ENCODE measurements at regions of chr6 and their contacts with region 1.

Region 1: DNA sequence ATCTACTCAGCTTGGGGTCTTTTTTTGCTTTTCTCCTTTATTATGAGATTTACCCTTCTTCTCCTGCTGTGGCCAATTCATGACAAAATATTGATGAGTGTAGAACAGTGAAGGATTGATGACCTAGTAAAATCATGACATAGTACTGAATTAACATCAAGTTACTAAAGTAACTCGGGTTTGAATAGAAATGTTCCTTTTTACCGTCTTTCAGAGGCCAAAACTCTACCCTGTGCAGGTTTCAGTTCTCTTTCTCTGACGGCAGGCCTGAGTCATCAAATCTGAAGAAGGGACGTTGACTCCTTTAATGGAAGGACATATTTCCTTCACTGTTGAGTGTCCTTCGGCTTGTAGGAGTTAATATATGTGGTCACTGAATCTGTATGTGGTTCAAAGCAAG is 80.7 kb downstream of the RREB1 start:
- DNase-seq: peak; percentile 51
- ATAC-seq: peak; percentile 79
- H3K4me3 ChIP-seq: no peak overlapping the region
- H3K4me3 Mint-ChIP-seq: peak overlapping the region; percentile 33
- H3K27ac ChIP-seq: peak overlapping the region in 1 of 2 donors; percentile 47
- H3K27ac Mint-ChIP-seq: peak overlapping the region; percentile 71
- H3K4me1 ChIP-seq: peaks cover 8 to 14% of the 10 kb centered on the region in 2 donors
- H3K4me1 Mint-ChIP-seq: peaks cover 16% of the 10 kb centered on the region
- H3K27me3 ChIP-seq: no peaks in the 10 kb centered on the region
- H3K27me3 Mint-ChIP-seq: no peaks in the 10 kb centered on the region
- CTCF ChIP-seq: no peak

Region 2: DNA sequence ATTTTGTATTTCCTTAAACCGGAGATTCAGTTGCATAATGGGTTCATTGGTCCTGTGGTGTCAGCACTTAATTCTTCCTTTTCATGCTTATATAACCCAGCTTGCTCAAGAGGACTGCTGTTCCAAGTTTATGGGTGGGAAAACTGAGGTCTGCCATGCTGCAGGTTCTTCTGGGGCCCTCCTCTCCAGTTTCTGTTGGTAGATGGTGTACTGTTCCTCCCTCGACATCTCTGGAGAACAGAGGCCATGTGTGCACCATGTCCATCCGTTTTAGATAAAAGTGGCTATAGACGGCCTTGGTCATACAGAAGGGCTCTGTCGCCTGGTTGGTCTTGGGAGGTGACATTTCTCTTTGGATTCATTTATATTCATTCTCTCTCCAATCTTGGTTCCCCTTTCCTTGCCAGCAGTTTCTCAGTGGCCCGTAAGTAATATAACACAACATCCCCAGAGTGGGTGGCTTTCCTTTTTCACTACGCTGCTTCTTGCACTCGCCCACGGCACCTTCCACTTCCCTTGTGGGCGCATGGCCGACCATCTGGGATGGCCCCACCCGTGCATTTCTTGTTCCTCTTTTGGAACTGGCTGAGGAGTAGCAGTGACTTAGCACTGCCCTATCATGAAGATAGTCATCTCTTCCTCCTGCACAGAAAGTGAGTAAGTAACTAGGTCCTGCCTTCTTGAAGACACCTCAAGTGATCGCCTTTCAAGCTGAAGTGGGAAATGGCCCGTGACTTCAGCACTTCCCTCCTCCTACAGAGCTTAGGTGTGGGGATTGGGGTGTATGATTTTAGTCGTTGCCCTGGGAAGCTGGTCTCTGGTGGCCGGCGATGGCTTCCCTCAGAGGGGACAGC is 13.4 kb after region 1 on chr6:
- CTCF ChIA-PET with region 1: no interaction called
- POLR2A ChIA-PET with region 1: no interaction called
- intact Hi-C with region 1: loop called (anchors 1 kb)
- DNase-seq: peak; percentile 87
- ATAC-seq: peak; percentile 97
- H3K4me3 ChIP-seq: peak overlapping the region in 3 of 5 experiments; percentile 3 to 9 (median 7)
- H3K4me3 Mint-ChIP-seq: peak overlapping the region; percentile 62
- H3K27ac ChIP-seq: peak overlapping the region; percentile 48 to 69
- H3K27ac Mint-ChIP-seq: peak overlapping the region; percentile 88
- H3K4me1 ChIP-seq: peaks cover 40 to 46% of the 10 kb centered on the region in 2 donors
- H3K4me1 Mint-ChIP-seq: peaks cover 52% of the 10 kb centered on the region
- H3K27me3 ChIP-seq: no peaks in the 10 kb centered on the region
- H3K27me3 Mint-ChIP-seq: no peaks in the 10 kb centered on the region
- CTCF ChIP-seq: no peak